ENCODE measurements at regions of chr22 and their contacts with region 1.

Region 1: DNA sequence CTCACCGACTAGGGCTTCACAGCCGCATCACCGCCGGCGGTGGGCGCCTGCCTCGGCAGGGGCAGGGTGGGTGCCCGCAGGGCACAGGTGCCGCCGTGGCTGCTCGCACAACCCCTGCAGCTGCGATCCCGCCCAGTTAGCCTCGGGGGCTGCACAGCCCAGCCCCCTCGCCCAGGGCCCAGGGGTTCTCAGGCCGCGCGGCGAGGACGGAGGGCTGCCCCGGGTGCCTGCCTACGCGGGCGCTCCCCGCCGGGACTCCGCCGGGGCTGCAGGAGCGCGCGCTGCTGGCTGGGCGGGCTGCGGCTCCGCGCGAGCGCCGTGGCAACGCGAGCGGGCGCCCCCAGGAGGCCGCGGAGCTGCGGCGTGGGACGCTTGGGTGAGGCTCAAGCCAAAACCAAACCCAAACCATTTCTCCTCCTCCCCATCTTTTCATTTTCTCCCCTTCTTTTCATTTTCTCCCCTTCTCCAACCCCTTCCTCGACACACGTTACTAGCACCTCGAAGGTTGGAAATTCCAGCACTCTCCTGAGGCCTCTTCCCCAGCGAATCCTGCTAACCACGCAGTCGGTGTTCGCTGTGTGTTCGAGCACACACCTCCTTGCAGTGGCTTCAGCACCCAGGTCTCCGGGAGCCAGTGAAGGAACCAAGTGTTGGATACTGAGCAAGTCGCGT is at the start of gene MICAL3:
- DNase-seq: peak; percentile 57 to 61
- ATAC-seq: peak; percentile 89
- H3K4me3 ChIP-seq: peak within 1 kb of the TSS; percentile 76
- H3K27ac ChIP-seq: peak within 1 kb of the TSS; percentile 89 to 97
- H3K4me1 ChIP-seq: peaks cover 25% of the 10 kb centered on the region
- CTCF ChIP-seq: peak; percentile 63
- EP300 ChIP-seq: no peak
- POLR2A ChIP-seq: 0 out of 2 replicates have a peak, but pooled peaks have one; percentile 18
- RAD21 ChIP-seq: peak; percentile 28 to 62
- polyA plus RNA-seq, gene MICAL3: 18.7 and 20.5 TPM in 2 replicates

Region 2: GRCh38 chr22:18012531-18012930 is 11.9 kb before region 1 on chr22:
- CTCF ChIA-PET with region 1: interaction called, 14 read pairs
- POLR2A ChIA-PET with region 1: no interaction called
- DNase-seq: no peak
- ATAC-seq: peak; percentile 27 to 30; a peak in 2 of 6 replicates
- H3K4me3 ChIP-seq: no peak overlapping the region
- H3K27ac ChIP-seq: peak overlapping the region in 1 of 2 experiments; percentile 34; a peak in 1 of 6 replicates
- H3K4me1 ChIP-seq: peaks cover 12% of the 10 kb centered on the region
- CTCF ChIP-seq: no peak
- EP300 ChIP-seq: no peak
- POLR2A ChIP-seq: no peak
- RAD21 ChIP-seq: no peak

Region 3: GRCh38 chr22:18070556-18071306 is 46.3 kb after region 1 on chr22:
- CTCF ChIA-PET with region 1: interaction called, 57 read pairs
- POLR2A ChIA-PET with region 1: no interaction called
- DNase-seq: no peak
- ATAC-seq: no peak
- H3K4me3 ChIP-seq: no peak overlapping the region
- H3K27ac ChIP-seq: peak overlapping the region; percentile 17 to 33; a peak in 2 of 6 replicates
- H3K4me1 ChIP-seq: peaks cover 13% of the 10 kb centered on the region
- CTCF ChIP-seq: no peak
- EP300 ChIP-seq: no peak
- POLR2A ChIP-seq: no peak
- RAD21 ChIP-seq: no peak

Measured in A549 (cell line).